Pancreas (tissue), 10 donors: ENCODE measurements at regions of chr11 and their contacts with region 1.

Region 1: GRCh38 chr11:107043242-107044006 is 25.1 kb upstream of the GUCY1A2 start:
- DNase-seq: no peak
- ATAC-seq: peak in 1 of 4 donors; percentile 41
- H3K4me3 ChIP-seq: no peak overlapping the region
- H3K27ac ChIP-seq: no peak overlapping the region
- H3K4me1 ChIP-seq: no peaks in the 10 kb centered on the region
- H3K27me3 ChIP-seq: no peaks in the 10 kb centered on the region
- CTCF ChIP-seq: no peak

Region 2: DNA sequence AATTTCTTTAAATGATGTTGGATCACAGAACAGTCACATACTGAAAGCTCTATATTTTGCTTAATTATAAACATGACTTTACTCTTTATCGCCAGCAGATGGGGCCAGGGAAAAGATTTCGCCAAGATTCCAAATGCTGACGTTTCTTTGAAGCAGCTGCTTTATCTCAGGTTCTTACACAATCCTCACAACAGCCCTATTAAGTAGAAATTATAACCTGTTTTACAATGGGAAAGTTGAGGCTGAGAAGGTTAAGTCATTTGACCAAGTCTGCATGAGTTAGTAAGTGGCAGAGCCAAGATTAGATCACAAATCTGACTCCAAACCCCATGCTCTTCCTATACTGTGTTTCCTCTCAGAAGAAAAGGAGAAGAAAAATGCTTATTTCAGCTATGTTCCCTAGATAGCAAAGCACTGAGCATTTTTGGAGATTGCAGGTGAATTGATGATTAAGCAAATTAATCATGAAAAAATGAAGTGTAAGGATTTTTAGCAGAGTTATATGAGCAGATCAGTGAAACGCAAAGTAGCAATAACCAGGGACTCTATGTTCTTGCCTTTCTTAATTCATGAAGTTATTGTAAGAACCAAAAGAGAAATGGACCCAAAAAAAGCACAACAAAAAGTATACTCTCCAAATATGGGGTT is 887.0 kb before region 1 on chr11:
- intact Hi-C with region 1: loop called in 1 of 3 experiments (anchors 10 kb)
- DNase-seq: peak in 2 of 6 donors; percentile 14 to 47
- ATAC-seq: peak; percentile 68 to 88 (median 84)
- H3K4me3 ChIP-seq: no peak overlapping the region
- H3K27ac ChIP-seq: no peak overlapping the region
- H3K4me1 ChIP-seq: peaks cover 0 to 16% (median 10%) of the 10 kb centered on the region in 3 donors
- H3K27me3 ChIP-seq: no peaks in the 10 kb centered on the region
- CTCF ChIP-seq: peak in 3 of 4 donors; percentile 18 to 40 (median 33)

Region 3: DNA sequence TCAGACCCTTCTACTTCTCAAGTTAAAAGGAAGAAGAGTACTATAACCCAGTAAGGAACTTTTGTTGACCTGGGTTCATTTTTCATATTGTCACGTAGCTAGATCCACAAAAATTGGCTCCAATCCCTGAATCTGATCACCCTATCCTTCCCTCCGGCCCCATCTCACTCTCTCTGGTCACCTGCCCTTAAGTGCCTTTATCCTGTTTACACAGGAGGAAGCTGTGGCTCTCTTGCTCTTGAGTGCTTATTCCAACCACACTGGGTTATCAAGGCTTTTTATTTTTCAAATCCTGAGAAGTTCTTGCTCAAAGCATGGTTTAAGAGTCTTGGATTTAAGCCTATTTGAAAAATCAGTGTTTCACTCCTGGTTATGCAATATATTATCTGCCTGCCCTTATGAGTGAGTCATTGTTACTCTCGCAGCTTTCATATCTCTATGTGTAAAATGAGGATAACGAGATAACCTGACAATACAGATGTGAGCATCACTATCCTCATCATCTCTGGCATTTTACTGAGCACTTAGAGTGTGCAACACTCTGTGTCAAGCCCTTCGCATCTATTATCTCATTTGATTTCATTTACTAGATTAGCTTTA is 319.0 kb before region 1 on chr11:
- intact Hi-C with region 1: loop called in 1 of 3 experiments (anchors 10 kb)
- DNase-seq: no peak
- ATAC-seq: peak in 2 of 4 donors; percentile 38 to 59
- H3K4me3 ChIP-seq: no peak overlapping the region
- H3K27ac ChIP-seq: no peak overlapping the region
- H3K4me1 ChIP-seq: no peaks in the 10 kb centered on the region
- H3K27me3 ChIP-seq: no peaks in the 10 kb centered on the region
- CTCF ChIP-seq: no peak